IMR-90 (cell line): ENCODE measurements at regions of chr2 and their contacts with region 1.

Region 1: GRCh38 chr2:31333527-31334183 is 80.9 kb downstream of the XDH start:
- DNase-seq: peak; percentile 84
- ATAC-seq: peak; percentile 74
- H3K4me3 ChIP-seq: no peak overlapping the region
- H3K27ac ChIP-seq: no peak overlapping the region
- H3K4me1 ChIP-seq: peaks cover 17% of the 10 kb centered on the region
- H3K27me3 ChIP-seq: 0 out of 2 replicates have a peak, but pooled peaks cover 2% of the 10 kb centered on the region
- CTCF ChIP-seq: peak; percentile 99
- POLR2A ChIP-seq: no peak
- RAD21 ChIP-seq: peak; percentile 99

Region 2: DNA sequence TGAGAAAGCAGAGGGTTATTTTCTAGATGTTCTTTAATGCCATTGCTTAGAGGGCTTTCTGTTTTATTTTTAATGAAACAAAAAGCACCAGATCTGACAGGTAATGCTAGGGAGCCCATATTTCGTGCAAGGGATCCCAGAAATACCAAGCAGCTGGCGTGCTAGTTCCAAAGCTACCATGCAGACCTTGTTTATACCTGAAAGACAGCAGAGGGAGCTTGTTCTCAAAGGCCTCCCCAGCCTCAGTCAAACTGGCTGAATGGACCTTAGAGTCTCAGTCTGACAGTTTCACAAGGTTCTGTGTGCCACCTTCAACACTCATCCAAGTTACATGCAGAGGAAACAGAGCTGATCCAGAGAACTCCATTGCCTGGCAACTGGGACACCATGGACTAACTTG is 244.0 kb before region 1 on chr2:
- CTCF ChIA-PET with region 1: no interaction called
- POLR2A ChIA-PET with region 1: no interaction called
- dilution Hi-C with region 1: no loop called
- in situ Hi-C with region 1: no loop called
- intact Hi-C with region 1: loop called (anchors 5 kb)
- DNase-seq: no peak
- ATAC-seq: no peak
- H3K4me3 ChIP-seq: no peak overlapping the region
- H3K27ac ChIP-seq: no peak overlapping the region
- H3K4me1 ChIP-seq: no peaks in the 10 kb centered on the region
- H3K27me3 ChIP-seq: no peaks in the 10 kb centered on the region
- CTCF ChIP-seq: no peak
- POLR2A ChIP-seq: no peak
- RAD21 ChIP-seq: no peak

Region 3: DNA sequence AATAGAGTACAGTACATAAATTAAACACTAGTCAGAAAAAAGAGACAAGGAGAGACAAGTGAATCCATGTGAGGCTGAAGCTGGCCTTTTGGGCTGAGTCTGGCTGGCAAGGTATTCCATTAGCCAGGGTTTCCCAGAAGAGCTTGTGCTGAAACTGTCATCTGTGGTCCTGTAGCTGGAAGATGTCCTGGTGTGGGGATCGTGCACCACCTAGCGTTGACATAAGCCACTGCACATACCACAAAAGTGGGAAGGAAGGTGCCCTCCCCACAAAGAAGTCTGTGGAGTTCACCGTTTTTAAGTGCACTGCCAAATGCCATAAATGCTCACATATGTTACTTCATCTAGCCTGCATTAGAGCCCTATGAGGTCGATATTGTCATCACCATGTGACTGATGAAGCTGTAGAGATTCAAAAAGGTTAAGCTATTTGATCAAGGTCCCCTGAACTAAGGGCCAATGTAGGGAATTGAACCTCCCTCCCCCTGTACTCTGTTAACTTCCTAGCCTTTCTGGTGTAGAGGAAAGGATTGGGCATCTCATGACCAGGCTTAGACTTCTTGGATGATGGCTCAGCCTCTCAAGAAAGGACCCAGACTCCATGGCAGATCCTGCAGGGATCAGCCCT is 163.5 kb before region 1 on chr2:
- CTCF ChIA-PET with region 1: interaction called, 4 read pairs
- POLR2A ChIA-PET with region 1: no interaction called
- dilution Hi-C with region 1: no loop called
- in situ Hi-C with region 1: no loop called
- intact Hi-C with region 1: loop called (anchors 1 kb)
- DNase-seq: peak; percentile 60
- ATAC-seq: peak; percentile 98
- H3K4me3 ChIP-seq: no peak overlapping the region
- H3K27ac ChIP-seq: no peak overlapping the region
- H3K4me1 ChIP-seq: no peaks in the 10 kb centered on the region
- H3K27me3 ChIP-seq: peaks cover 9% of the 10 kb centered on the region; the same call in 1 of the 2 replicates
- CTCF ChIP-seq: peak; percentile 83
- POLR2A ChIP-seq: no peak
- RAD21 ChIP-seq: peak; percentile 80

Region 4: GRCh38 chr2:31318361-31319336 is 15.0 kb before region 1 on chr2:
- CTCF ChIA-PET with region 1: interaction called, 9 read pairs
- POLR2A ChIA-PET with region 1: interaction called, 12 read pairs
- dilution Hi-C with region 1: no loop called
- in situ Hi-C with region 1: no loop called
- intact Hi-C with region 1: no loop called
- DNase-seq: peak; percentile 86
- ATAC-seq: peak; percentile 69
- H3K4me3 ChIP-seq: no peak overlapping the region
- H3K27ac ChIP-seq: peak overlapping the region; percentile 90
- H3K4me1 ChIP-seq: peaks cover 19% of the 10 kb centered on the region
- H3K27me3 ChIP-seq: no peaks in the 10 kb centered on the region
- CTCF ChIP-seq: no peak
- POLR2A ChIP-seq: no peak
- RAD21 ChIP-seq: no peak